ENCODE measurements at regions of chr3 and their contacts with region 1.

Region 1: GRCh38 chr3:192188218-192188835 is 539.0 kb downstream of the FGF12 start:
- DNase-seq: peak; percentile 60
- ATAC-seq: peak; percentile 59

Region 2: DNA sequence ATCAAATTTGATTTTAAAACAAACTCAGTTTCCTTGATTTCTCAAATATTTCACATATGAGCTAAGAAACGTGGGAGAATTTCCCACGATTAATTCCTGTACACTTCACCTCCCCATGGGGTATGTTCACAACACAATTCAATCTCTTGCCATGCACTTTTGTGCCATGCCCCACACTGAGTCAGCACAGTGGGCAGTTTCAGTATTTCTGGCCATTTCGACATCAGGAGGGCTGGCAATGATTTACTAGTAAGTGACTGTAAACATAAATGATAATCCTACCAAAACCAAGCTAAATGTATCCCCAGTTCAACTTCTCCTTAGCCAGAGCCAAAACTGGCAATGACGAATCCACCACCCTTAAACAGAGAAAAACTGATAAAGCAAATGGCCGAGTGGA is 245.4 kb after region 1 on chr3:
- intact Hi-C with region 1: loop called in 1 of 2 experiments (anchors 5 kb)
- DNase-seq: no peak
- ATAC-seq: no peak

Region 3: GRCh38 chr3:192449036-192449435 is 260.7 kb after region 1 on chr3:
- intact Hi-C with region 1: no loop called
- DNase-seq: no peak
- ATAC-seq: no peak

Measured in left cardiac atrium (tissue), 4 donors.